Right lobe of liver (tissue), 6 donors: ENCODE measurements at regions of chr6 and their contacts with region 1.

Region 1: DNA sequence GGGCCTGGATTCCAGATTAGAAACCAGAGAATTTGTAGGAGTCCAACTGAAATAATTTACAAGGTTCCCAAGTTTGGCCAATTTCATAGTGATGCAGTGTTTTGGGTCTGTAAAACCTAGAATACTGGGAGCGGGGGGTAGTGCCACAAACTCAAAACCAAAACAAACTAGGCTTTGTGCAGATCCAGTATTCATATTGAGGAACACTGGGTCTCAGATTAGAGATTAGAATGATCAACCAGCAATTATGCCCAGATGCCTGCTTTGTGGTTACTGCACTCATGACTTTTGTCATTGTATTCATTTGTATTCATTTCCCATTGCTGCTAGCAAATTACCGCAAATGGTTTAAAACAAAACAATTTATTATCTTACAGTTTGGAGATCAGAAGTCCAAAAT is 3.2 kb upstream of the NDUFAF4 start:
- DNase-seq: no peak
- ATAC-seq: no peak
- H3K4me3 ChIP-seq: no peak overlapping the region
- H3K27ac ChIP-seq: no peak overlapping the region
- H3K4me1 ChIP-seq: peaks cover 0 to 21% (median 7%) of the 10 kb centered on the region in 4 donors
- H3K27me3 ChIP-seq: no peaks in the 10 kb centered on the region
- CTCF ChIP-seq: no peak
- POLR2A ChIP-seq: no peak

Region 2: GRCh38 chr6:97053643-97054411 is 153.0 kb after region 1 on chr6:
- intact Hi-C with region 1: loop called (anchors 5 to 10 kb)
- DNase-seq: no peak
- ATAC-seq: peak in 1 of 4 donors; percentile 47
- H3K4me3 ChIP-seq: no peak overlapping the region
- H3K27ac ChIP-seq: no peak overlapping the region
- H3K4me1 ChIP-seq: no peaks in the 10 kb centered on the region
- H3K27me3 ChIP-seq: no peaks in the 10 kb centered on the region
- CTCF ChIP-seq: peak; percentile 43 to 64 (median 56)
- POLR2A ChIP-seq: no peak

Region 3: GRCh38 chr6:97077380-97077779 is 176.5 kb after region 1 on chr6:
- intact Hi-C with region 1: no loop called
- DNase-seq: no peak
- ATAC-seq: no peak
- H3K4me3 ChIP-seq: no peak overlapping the region
- H3K27ac ChIP-seq: no peak overlapping the region
- H3K4me1 ChIP-seq: no peaks in the 10 kb centered on the region
- H3K27me3 ChIP-seq: no peaks in the 10 kb centered on the region
- CTCF ChIP-seq: no peak
- POLR2A ChIP-seq: no peak

Region 4: DNA sequence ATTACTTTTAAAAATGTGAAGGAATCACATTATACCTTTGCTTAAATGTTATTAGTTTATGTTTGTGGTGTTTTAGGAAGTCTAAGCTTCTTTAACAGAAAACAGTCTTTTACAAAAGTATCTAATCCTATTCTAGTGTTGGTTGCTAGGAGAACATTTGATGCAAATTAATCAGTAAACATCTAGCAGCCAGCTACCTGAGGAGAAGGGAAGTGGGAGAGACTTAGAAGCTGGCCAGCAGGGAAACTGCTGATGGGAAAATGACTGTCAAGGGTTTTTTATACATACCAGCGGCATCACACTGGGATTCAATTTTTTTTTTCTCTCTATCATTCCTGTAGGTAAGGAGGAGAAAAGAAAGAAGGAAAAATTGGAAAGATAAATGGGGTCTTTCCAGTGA is 1068.2 kb after region 1 on chr6:
- intact Hi-C with region 1: no loop called
- DNase-seq: no peak
- ATAC-seq: no peak
- H3K4me3 ChIP-seq: no peak overlapping the region
- H3K27ac ChIP-seq: no peak overlapping the region
- H3K4me1 ChIP-seq: no peaks in the 10 kb centered on the region
- H3K27me3 ChIP-seq: no peaks in the 10 kb centered on the region
- CTCF ChIP-seq: no peak
- POLR2A ChIP-seq: no peak